Mammary epithelial cell (primary cell): ENCODE measurements at regions of chr4 and their contacts with region 1.

Region 1: DNA sequence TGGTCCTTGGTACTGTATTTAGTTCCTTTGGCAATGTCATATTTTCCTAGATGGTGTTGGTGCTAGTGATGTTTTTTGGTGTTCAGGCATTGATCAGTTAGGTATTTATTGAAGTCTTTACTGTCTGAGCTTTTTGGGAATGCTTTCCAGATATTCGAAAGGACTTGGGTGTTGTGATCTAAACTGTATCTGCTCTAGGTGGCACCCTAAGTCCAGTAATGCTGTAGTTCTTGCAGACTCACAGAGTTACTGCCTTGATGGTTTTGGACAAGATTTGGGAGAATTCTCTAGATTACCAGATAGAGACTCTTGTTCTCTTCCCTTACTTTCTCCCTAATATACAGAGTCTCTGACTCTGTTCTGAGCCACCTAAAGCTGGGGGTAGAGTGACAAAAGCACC is 513.6 kb upstream of the PITX2 start:
- DNase-seq: no peak
- H3K4me3 ChIP-seq: no peak overlapping the region
- H3K27ac ChIP-seq: no peak overlapping the region
- H3K4me1 ChIP-seq: no peaks in the 10 kb centered on the region
- H3K27me3 ChIP-seq: no peaks in the 10 kb centered on the region
- CTCF ChIP-seq: peak in 1 of 2 donors; percentile 38

Region 2: GRCh38 chr4:110869862-110870572 is 266.4 kb before region 1 on chr4:
- CTCF ChIA-PET with region 1: no interaction called
- dilution Hi-C with region 1: no loop called
- in situ Hi-C with region 1: no loop called
- intact Hi-C with region 1: no loop called
- DNase-seq: no peak
- H3K4me3 ChIP-seq: no peak overlapping the region
- H3K27ac ChIP-seq: no peak overlapping the region
- H3K4me1 ChIP-seq: peaks cover 4% of the 10 kb centered on the region
- H3K27me3 ChIP-seq: no peaks in the 10 kb centered on the region
- CTCF ChIP-seq: no peak

Region 3: DNA sequence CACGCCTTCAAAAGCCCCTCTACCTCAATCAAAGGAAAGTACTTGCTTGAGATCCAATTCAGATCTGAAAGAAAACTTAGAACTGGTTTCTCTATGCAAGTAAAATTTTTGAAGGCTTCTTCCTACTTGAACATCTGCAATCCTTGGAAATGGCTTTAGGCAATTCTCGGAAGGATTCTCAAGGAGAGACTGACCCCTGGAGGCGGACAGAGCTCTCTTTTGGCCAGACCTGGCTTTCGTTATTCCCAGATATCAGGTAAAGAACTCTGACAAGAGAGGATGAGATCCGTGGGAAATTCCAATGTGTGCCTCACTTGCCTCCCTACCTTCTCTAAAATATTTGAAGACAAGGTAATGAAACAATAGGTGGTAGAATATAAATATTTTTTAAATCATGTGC is 338.6 kb after region 1 on chr4:
- CTCF ChIA-PET with region 1: no interaction called
- dilution Hi-C with region 1: no loop called
- in situ Hi-C with region 1: no loop called
- intact Hi-C with region 1: loop called (anchors 2 kb)
- DNase-seq: peak; percentile 6
- H3K4me3 ChIP-seq: no peak overlapping the region
- H3K27ac ChIP-seq: no peak overlapping the region
- H3K4me1 ChIP-seq: no peaks in the 10 kb centered on the region
- H3K27me3 ChIP-seq: no peaks in the 10 kb centered on the region
- CTCF ChIP-seq: peak; percentile 53 to 63